ENCODE measurements at regions of chr11 and their contacts with region 1.

Region 1: GRCh38 chr11:66258473-66258893 is 10.0 kb upstream of the RAB1B start:
- DNase-seq: no peak
- H3K4me3 ChIP-seq: peak overlapping the region; percentile 93
- H3K27ac ChIP-seq: no peak overlapping the region
- H3K4me1 ChIP-seq: 0 out of 2 replicates have a peak, but pooled peaks cover 15% of the 10 kb centered on the region
- H3K27me3 ChIP-seq: no peaks in the 10 kb centered on the region
- CTCF ChIP-seq: peak; percentile 51; the same call in 1 of the 2 replicates

Region 2: DNA sequence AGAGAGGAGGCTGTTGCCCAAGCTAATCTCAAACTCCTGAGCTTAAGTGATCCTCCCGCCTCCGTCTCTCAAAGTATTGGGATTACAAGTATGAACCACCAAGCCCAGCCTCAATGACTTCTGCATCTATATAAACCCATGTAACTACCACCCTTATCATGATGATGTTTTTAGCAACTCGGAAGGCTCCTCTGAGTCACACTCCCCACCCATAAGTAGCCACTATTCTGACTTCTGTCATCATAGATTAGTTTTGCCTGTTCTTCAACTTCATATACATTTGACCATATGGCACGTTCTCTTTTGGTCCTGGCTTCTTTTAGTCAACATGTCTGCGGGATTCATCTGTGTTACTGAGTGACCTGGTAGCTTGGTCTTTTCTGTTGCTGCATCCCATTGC is 351.9 kb before region 1 on chr11:
- CTCF ChIA-PET with region 1: no interaction called
- POLR2A ChIA-PET with region 1: interaction called, 10 read pairs
- intact Hi-C with region 1: no loop called
- DNase-seq: no peak
- H3K4me3 ChIP-seq: no peak overlapping the region
- H3K27ac ChIP-seq: peak overlapping the region; percentile 42
- H3K4me1 ChIP-seq: peaks cover 70% of the 10 kb centered on the region
- H3K27me3 ChIP-seq: no peaks in the 10 kb centered on the region
- CTCF ChIP-seq: no peak

Region 3: DNA sequence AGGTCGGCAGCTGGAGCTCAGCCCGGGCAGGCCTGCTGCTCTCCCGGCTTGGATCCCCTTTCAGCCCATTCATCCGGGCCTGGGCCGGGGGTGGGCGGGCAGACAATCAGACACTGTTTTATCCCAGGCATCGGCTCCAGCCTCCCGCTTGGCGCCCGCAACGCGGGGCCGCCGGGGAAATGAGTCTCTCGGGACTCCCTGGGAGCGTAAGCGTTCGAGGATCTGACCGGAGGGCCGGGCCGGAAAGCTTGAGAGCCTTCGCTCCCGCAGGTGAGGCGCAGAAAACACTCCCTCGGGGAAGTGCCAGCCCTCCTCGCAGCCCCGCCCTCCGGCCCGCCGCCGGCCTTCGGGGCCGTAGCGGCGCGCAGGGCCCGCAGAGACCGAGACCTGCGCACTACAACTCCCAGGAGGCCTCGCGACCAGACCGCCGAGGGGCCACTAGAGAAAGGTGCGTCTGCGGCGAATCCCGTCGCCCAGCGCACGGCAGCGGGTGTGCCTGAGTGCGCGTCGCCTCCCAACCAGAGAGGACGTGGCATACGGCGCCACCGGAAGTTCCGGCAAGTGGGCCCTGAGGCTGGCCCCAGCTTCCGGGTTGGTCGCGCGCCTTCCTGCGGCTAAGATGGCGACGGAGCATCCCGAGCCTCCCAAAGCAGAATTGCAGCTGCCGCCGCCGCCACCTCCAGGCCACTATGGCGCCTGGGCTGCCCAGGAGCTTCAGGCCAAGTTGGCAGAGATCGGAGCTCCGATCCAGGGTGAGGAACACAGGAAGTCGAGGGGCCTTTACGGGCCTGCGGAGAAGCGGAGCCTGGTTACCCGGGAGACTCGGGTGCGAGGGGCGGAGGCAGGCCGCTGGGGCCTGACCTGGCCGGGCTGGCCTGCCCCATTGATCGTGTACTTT is 206.5 kb before region 1 on chr11 and contains the start of gene SF3B2:
- CTCF ChIA-PET with region 1: no interaction called
- POLR2A ChIA-PET with region 1: interaction called, 23 read pairs
- intact Hi-C with region 1: no loop called
- DNase-seq: peak; percentile 98 to 99
- H3K4me3 ChIP-seq: peak within 1 kb of the TSS; percentile 99
- H3K27ac ChIP-seq: peak within 1 kb of the TSS; percentile 75
- H3K4me1 ChIP-seq: peaks cover 20% of the 10 kb centered on the region
- H3K27me3 ChIP-seq: no peaks in the 10 kb centered on the region
- CTCF ChIP-seq: no peak
- total RNA-seq, gene SF3B2: 221 and 224 TPM in 2 replicates

Region 4: DNA sequence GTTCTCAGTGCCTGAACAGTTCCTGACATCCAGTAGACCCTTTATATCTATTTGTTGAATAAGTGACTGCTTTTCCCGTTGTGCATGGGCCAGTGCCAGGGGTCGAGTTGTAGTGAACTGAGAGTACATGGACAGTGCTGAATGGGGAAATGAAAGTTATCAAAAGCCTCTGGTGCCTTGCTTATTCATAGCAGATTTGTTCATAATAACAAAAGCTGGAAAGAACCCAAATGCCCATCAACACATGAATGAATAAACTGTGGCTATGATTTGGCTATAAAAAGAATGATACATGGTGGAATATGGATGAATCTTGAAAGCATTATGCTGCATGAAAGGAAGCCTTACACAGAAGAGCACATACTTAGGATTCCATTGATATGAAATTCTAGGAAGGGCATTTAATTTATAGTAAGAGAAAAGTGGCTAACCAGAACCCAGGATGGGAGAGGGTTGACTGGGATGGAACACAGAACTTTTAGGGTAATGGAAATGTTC is 145.8 kb before region 1 on chr11:
- CTCF ChIA-PET with region 1: no interaction called
- POLR2A ChIA-PET with region 1: interaction called, 10 read pairs
- intact Hi-C with region 1: no loop called
- DNase-seq: peak in 1 of 2 experiments; percentile 63
- H3K4me3 ChIP-seq: no peak overlapping the region
- H3K27ac ChIP-seq: peak overlapping the region; percentile 67
- H3K4me1 ChIP-seq: peaks cover 45% of the 10 kb centered on the region
- H3K27me3 ChIP-seq: no peaks in the 10 kb centered on the region
- CTCF ChIP-seq: no peak

Region 5: GRCh38 chr11:66466225-66467027 is 207.9 kb after region 1 on chr11 and contains the start of gene PELI3:
- CTCF ChIA-PET with region 1: no interaction called
- POLR2A ChIA-PET with region 1: interaction called, 12 read pairs
- intact Hi-C with region 1: no loop called
- DNase-seq: peak; percentile 77 to 95
- H3K4me3 ChIP-seq: peak within 1 kb of the TSS; percentile 90
- H3K27ac ChIP-seq: no peak within 1 kb of the TSS
- H3K4me1 ChIP-seq: peaks cover 10% of the 10 kb centered on the region
- H3K27me3 ChIP-seq: no peaks in the 10 kb centered on the region
- CTCF ChIP-seq: no peak
- total RNA-seq, gene PELI3: 14.0 and 18.0 TPM in 2 replicates

Measured in PC-9 (cell line).